Heart right ventricle (tissue), 16 donors: ENCODE measurements at regions of chr13 and their contacts with region 1.

Region 1: GRCh38 chr13:80923907-80924306 is 583.0 kb upstream of the SPRY2 start:
- DNase-seq: no peak
- ATAC-seq: peak in 5 of 8 donors; percentile 48 to 82 (median 71)
- H3K4me3 ChIP-seq: no peak overlapping the region
- H3K27ac ChIP-seq: peak overlapping the region in 6 of 10 donors; percentile 11 to 48 (median 27)
- H3K4me1 ChIP-seq: peaks cover 0 to 16% (median 6%) of the 10 kb centered on the region in 9 donors
- H3K27me3 ChIP-seq: no peaks in the 10 kb centered on the region
- CTCF ChIP-seq: peak in 8 of 9 donors; percentile 7 to 54 (median 29)

Region 2: DNA sequence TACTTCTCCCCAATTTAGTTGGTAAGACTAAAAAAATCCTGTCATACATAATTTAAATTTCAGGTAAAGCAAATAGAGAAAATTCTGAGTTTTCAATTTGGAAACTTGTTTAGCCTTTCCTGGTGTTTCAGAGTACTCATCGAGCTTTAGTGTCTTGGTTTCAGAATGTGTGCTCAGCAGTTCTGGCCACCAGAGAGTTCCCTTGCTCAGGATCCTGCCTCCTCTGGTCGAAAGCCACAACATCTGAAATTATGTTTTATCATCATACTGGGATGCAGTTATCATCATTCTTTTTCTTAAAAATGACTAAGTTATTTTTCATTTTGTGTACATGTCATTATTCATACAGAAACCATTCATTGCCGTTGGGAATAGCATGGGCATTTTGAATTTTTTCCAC is 319.8 kb before region 1 on chr13:
- intact Hi-C with region 1: loop called in 1 of 10 experiments (anchors 10 kb)
- DNase-seq: peak in 1 of 2 donors; percentile 39
- ATAC-seq: peak in 7 of 8 donors; percentile 67 to 88 (median 80)
- H3K4me3 ChIP-seq: no peak overlapping the region
- H3K27ac ChIP-seq: peak overlapping the region in 9 of 10 donors; percentile 14 to 65 (median 35)
- H3K4me1 ChIP-seq: peaks cover 0 to 18% (median 5%) of the 10 kb centered on the region in 9 donors
- H3K27me3 ChIP-seq: no peaks in the 10 kb centered on the region
- CTCF ChIP-seq: peak in 5 of 9 donors; percentile 14 to 48 (median 35)

Region 3: GRCh38 chr13:80824229-80824628 is 99.7 kb before region 1 on chr13:
- intact Hi-C with region 1: loop called in 2 of 10 experiments (anchors 10 kb)
- DNase-seq: peak in 1 of 2 donors; percentile 8
- ATAC-seq: peak; percentile 38 to 97 (median 86)
- H3K4me3 ChIP-seq: no peak overlapping the region
- H3K27ac ChIP-seq: peak overlapping the region in 3 of 10 donors; percentile 31 to 36 (median 34)
- H3K4me1 ChIP-seq: peaks cover 0 to 9% (median 0%) of the 10 kb centered on the region in 9 donors
- H3K27me3 ChIP-seq: no peaks in the 10 kb centered on the region
- CTCF ChIP-seq: no peak

Region 4: DNA sequence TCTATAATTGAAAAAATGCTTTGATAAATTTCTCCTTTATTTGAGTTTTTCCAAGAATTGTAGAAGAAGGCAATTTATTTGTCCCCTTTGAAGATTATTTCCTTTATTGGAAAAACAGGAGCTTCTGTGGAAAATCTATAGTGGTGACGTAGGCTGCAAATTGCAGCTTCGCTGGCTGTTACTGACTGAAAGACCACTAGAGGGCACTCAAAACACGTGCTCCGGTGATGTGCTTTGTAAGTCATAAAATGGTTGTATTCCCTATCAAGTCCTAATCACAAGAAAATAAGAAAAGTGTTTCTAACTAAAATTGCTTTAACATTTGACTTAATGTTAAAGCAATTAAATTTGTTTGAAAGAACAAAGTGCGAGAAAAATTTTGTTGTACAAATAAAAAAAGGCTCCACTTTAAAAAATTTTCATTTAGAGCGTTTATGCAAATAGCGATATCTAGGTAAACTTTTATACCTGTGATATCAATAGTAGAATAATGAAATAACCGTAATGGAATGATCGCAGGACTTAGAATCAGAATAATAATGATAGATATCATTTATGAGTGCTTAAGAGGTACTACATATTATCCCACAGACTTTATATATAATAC is 55.2 kb after region 1 on chr13:
- intact Hi-C with region 1: no loop called
- DNase-seq: peak in 1 of 2 donors; percentile 44
- ATAC-seq: peak in 3 of 8 donors; percentile 37 to 67 (median 55)
- H3K4me3 ChIP-seq: no peak overlapping the region
- H3K27ac ChIP-seq: no peak overlapping the region
- H3K4me1 ChIP-seq: peaks cover 0 to 3% (median 0%) of the 10 kb centered on the region in 9 donors
- H3K27me3 ChIP-seq: no peaks in the 10 kb centered on the region
- CTCF ChIP-seq: peak; percentile 72 to 94 (median 86)